ENCODE measurements at regions of chr2 and their contacts with region 1.

Region 1: GRCh38 chr2:19863303-19864041 is 38.3 kb downstream of the TTC32 start:
- DNase-seq: peak; percentile 92
- ATAC-seq: peak; percentile 85

Region 2: DNA sequence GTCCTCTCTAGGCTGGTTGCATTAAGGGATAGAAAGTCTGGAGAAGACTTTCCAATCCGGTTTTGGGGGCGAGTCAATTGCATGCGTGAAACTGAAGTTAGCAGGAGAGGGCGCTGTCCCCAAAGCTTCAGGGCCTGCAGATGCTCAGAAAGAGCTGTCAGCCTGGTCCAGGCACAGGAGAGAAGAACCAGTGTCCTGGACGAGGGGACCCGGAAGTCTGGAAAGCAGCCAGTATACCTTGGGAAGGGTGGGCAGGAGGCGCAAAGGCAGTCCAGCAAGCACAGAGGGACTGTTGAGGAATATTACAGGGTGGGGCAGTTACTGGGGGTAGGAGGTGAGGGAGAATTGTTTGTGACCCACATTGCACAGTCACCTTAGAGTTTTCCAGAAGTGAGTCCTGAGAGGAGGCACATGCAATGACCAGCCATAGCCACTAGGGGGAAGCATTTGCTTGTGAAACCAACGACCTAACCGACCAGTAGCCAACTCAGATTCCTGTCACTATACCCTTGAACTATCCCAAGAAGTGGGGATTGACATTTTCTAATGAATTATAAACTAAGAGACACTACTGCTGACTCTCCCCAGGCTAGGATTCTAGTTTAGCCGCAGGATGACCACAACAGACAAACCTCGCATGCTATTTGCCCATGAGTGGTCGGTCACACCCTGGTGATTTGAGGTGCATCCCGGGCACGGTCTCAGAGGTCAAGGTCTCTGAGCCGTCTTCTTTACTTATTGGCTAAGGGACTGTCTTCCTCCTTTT is 1475.8 kb before region 1 on chr2:
- intact Hi-C with region 1: loop called (anchors 5 kb)
- DNase-seq: peak; percentile 74
- ATAC-seq: peak; percentile 91

Region 3: DNA sequence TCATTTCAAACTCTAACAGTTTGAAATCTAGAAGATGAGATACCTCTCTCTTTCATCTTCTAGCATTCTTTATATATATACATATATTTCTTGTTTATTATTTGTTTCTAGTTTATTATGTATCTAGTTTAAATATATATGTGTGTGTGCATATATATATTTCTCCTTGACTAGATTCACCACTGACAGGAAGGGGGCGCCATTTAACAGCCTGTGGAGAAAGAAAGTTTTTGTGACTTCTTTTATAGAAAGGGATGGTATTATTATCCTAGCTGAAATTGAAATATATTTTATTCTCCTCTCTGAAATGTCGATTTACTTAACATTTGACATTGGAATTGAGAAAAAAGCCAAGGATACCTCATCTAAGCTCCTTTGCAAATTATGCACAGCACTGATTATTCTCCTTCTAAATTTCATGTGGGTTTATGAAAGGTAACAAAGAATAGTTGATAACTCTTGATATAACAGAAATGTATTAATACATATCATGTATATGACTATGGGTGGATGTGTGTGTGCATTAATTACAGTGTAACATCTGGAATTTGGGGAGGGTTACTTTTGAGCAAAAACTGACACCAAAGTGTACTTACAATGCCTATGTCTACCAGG is 1113.5 kb before region 1 on chr2:
- intact Hi-C with region 1: loop called (anchors 2 kb)
- DNase-seq: no peak
- ATAC-seq: no peak

Region 4: GRCh38 chr2:19347619-19348562 is 515.6 kb before region 1 on chr2:
- intact Hi-C with region 1: loop called (anchors 5 kb)
- DNase-seq: peak; percentile 98
- ATAC-seq: peak; percentile 97

Region 5: GRCh38 chr2:19769513-19769912 is 94.0 kb before region 1 on chr2:
- intact Hi-C with region 1: loop called (anchors 5 kb)
- DNase-seq: no peak
- ATAC-seq: no peak

Region 6: DNA sequence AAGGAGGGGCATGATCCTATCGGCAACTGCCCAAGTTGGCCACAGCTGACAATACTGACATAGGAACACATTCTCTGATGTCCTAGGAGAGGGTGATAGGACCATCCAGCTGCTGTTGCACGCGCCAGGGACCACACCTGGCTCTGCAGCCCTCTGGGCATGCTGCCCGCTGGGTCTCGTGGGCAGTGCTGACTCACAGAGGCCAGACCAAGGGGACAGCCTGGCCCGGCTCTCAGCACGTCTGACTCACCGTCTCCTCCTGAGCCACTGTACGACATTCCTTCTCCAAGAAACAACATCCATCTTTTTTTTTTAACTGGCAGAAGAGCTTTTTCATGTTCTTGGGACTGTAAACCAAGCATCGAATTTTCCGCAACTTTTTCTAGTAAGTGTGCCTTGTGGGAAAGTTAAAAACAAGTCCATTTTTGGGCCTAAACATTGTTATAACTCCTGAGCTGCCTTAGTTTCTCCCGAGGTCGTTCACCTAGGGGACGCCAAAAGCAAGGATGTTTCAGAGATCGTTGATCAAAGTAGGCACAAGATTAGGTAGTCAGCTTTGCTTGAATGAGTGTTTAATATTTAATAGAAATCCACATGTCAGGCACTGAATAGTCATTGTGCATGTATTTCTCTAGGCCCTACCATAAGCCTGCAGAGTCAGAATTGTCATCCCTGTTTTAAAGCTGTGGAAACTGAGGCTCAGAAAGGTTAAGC is 61.9 kb before region 1 on chr2:
- intact Hi-C with region 1: loop called (anchors 5 kb)
- DNase-seq: peak; percentile 86
- ATAC-seq: peak; percentile 93

Region 7: DNA sequence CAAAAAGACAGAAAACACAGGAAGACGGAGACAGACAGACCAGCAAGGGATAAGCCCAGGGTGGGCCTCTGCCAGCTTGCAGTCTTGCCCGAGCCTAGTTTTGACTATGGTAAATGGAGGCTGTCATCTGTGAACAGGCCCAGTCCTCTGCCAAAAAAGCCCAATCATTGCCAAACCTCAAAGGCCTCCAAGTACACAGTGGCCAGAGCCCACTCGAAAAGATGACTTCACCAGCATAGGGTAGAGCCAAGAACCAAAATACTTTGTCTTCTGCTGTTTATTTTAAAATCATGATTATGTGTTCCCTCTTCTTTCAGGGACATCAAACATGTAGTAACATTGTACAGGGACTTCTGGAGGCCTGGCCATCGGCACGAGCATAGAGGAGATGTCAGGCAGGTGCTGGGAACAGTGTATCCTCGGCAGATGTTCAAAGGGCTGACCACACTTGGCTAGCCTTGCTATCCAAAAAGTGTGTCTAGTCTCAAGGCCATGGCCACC is 27.6 kb before region 1 on chr2:
- intact Hi-C with region 1: no loop called
- DNase-seq: no peak
- ATAC-seq: peak; percentile 84

Region 8: GRCh38 chr2:20001361-20001863 is 137.9 kb after region 1 on chr2:
- intact Hi-C with region 1: no loop called
- DNase-seq: no peak
- ATAC-seq: no peak

Measured in Right ventricle myocardium inferior (tissue), 1 donor.